ENCODE measurements at regions of chr3 and their contacts with region 1.

Region 1: GRCh38 chr3:156816800-156817645 is 9.1 kb upstream of the LEKR1 start:
- DNase-seq: peak; percentile 89
- H3K4me3 ChIP-seq: peak overlapping the region; percentile 49
- H3K27ac ChIP-seq: peak overlapping the region; percentile 63
- H3K4me1 ChIP-seq: peaks cover 54% of the 10 kb centered on the region
- H3K27me3 ChIP-seq: no peaks in the 10 kb centered on the region
- CTCF ChIP-seq: no peak; the same call in 1 of the 2 replicates

Region 2: DNA sequence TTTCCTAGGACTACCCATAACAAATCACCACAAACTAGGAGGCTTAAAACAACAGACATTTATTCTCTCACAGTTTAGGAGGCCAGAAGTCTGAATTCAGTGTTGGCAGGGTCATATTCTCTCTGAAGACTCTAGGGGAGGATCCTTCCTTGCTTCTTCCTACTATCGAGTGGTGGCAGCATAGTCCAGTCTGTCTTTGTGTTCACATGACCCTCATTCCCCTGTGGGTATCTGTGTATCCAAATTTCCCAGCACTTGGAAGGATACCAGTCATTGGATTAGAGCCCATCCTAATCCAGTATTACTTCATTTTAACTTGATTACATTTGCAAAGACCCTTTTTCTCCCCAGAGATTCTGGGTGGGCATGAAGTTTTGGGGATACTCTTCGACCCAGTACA is 882.8 kb before region 1 on chr3:
- CTCF ChIA-PET with region 1: no interaction called
- POLR2A ChIA-PET with region 1: no interaction called
- intact Hi-C with region 1: no loop called
- DNase-seq: no peak
- H3K4me3 ChIP-seq: no peak overlapping the region
- H3K27ac ChIP-seq: no peak overlapping the region
- H3K4me1 ChIP-seq: no peaks in the 10 kb centered on the region
- H3K27me3 ChIP-seq: no peaks in the 10 kb centered on the region
- CTCF ChIP-seq: no peak

Region 3: GRCh38 chr3:156449712-156450574 is 367.1 kb before region 1 on chr3:
- CTCF ChIA-PET with region 1: no interaction called
- POLR2A ChIA-PET with region 1: no interaction called
- intact Hi-C with region 1: no loop called
- DNase-seq: peak; percentile 39
- H3K4me3 ChIP-seq: no peak overlapping the region
- H3K27ac ChIP-seq: no peak overlapping the region
- H3K4me1 ChIP-seq: peaks cover 14% of the 10 kb centered on the region
- H3K27me3 ChIP-seq: no peaks in the 10 kb centered on the region
- CTCF ChIP-seq: peak; percentile 74

Region 4: GRCh38 chr3:156674046-156674910 is 142.7 kb before region 1 on chr3 and contains the start of gene TIPARP:
- CTCF ChIA-PET with region 1: no interaction called
- POLR2A ChIA-PET with region 1: no interaction called
- intact Hi-C with region 1: loop called (anchors 5 kb)
- DNase-seq: peak; percentile 99
- H3K4me3 ChIP-seq: peak within 1 kb of the TSS; percentile 89
- H3K27ac ChIP-seq: peak within 1 kb of the TSS; percentile 97
- H3K4me1 ChIP-seq: peaks cover 18% of the 10 kb centered on the region
- H3K27me3 ChIP-seq: no peaks in the 10 kb centered on the region
- CTCF ChIP-seq: peak; percentile 63
- total RNA-seq, gene TIPARP: 116 TPM in 2 replicates

Region 5: GRCh38 chr3:156793851-156794250 is 23.2 kb before region 1 on chr3:
- CTCF ChIA-PET with region 1: no interaction called
- POLR2A ChIA-PET with region 1: interaction called, 12 read pairs
- intact Hi-C with region 1: no loop called
- DNase-seq: no peak
- H3K4me3 ChIP-seq: no peak overlapping the region
- H3K27ac ChIP-seq: peak overlapping the region; percentile 33
- H3K4me1 ChIP-seq: peaks cover 21% of the 10 kb centered on the region
- H3K27me3 ChIP-seq: no peaks in the 10 kb centered on the region
- CTCF ChIP-seq: no peak

Region 6: DNA sequence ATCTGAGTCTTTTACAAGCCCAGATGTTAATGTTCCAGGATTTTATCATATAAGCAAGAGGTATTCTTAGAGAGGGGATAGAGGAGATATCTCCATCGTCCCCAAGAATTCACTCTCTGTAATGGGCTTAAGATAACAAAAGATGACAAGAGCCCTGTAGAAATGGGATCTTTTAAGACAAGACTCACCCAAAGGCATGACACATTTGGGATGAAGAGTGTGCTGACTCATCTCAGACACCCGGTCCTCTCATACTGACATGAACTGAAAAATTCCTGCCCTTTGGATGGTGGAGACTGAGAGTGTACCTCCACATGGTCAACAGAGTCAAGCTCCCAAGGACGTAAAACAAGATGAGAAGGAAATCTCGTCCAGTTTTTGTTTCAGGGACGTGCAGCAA is 20.1 kb after region 1 on chr3:
- CTCF ChIA-PET with region 1: no interaction called
- POLR2A ChIA-PET with region 1: no interaction called
- intact Hi-C with region 1: loop called (anchors 1 kb)
- DNase-seq: no peak
- H3K4me3 ChIP-seq: no peak overlapping the region
- H3K27ac ChIP-seq: peak overlapping the region; percentile 60
- H3K4me1 ChIP-seq: peaks cover 42% of the 10 kb centered on the region
- H3K27me3 ChIP-seq: no peaks in the 10 kb centered on the region
- CTCF ChIP-seq: no peak

Region 7: GRCh38 chr3:156964577-156964976 is 147.6 kb after region 1 on chr3:
- CTCF ChIA-PET with region 1: no interaction called
- POLR2A ChIA-PET with region 1: no interaction called
- intact Hi-C with region 1: no loop called
- DNase-seq: no peak
- H3K4me3 ChIP-seq: no peak overlapping the region
- H3K27ac ChIP-seq: no peak overlapping the region
- H3K4me1 ChIP-seq: no peaks in the 10 kb centered on the region
- H3K27me3 ChIP-seq: no peaks in the 10 kb centered on the region
- CTCF ChIP-seq: no peak